Heart right ventricle (tissue), 16 donors: ENCODE measurements at regions of chr10 and their contacts with region 1.

Region 1: GRCh38 chr10:111410740-111411139 is 333.9 kb downstream of the ADRA2A start:
- DNase-seq: no peak
- ATAC-seq: no peak
- H3K4me3 ChIP-seq: no peak overlapping the region
- H3K27ac ChIP-seq: no peak overlapping the region
- H3K4me1 ChIP-seq: no peaks in the 10 kb centered on the region
- H3K27me3 ChIP-seq: peaks cover 0 to 11% (median 0%) of the 10 kb centered on the region in 7 donors
- CTCF ChIP-seq: no peak

Region 2: DNA sequence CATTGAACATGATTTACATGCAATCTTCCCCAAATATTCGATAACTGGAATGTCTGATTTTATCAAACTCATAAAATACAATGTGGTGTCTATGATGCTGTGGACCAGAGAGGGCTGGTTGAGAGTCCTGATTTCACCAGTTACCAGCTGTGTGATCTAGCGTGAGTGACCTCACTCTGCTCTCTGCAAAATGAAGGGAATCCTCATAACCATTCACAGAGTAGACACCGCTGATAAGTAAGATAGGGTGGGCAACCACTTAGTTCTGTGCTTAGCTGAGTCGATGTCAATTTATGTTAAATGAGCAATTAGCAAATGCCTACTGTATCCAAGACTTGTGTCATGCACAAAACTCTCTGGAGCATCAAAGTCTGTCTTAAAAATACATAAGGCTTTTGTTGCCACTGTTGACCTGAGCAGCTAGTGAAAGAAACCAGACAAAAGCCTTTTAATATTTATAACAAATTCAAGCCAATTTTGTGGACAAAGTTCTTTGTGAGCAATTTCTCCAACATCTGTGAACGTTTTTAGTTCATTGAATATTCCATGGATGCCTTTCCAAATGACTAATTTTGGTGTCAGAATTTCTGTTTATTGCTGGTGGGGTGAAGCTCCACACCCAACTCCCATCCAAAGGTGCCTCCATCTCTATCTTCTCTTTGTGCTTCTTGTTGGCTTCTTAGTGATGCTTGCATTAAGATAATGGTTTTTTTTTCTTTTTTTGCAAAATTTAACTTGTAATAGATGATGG is 19.8 kb before region 1 on chr10:
- intact Hi-C with region 1: loop called in 1 of 10 experiments (anchors 1 kb)
- DNase-seq: no peak
- ATAC-seq: no peak
- H3K4me3 ChIP-seq: no peak overlapping the region
- H3K27ac ChIP-seq: no peak overlapping the region
- H3K4me1 ChIP-seq: no peaks in the 10 kb centered on the region
- H3K27me3 ChIP-seq: peaks cover 0 to 4% (median 0%) of the 10 kb centered on the region in 7 donors
- CTCF ChIP-seq: no peak